ENCODE measurements at regions of chr12 and their contacts with region 1.

Region 1: GRCh38 chr12:27462151-27462694 is 15.7 kb downstream of the SMCO2 start:
- DNase-seq: no peak
- H3K4me3 Mint-ChIP-seq: peak overlapping the region; percentile 1
- H3K27ac Mint-ChIP-seq: peak overlapping the region; percentile 72
- H3K4me1 Mint-ChIP-seq: peaks cover 53% of the 10 kb centered on the region
- H3K27me3 Mint-ChIP-seq: no peaks in the 10 kb centered on the region

Region 2: GRCh38 chr12:27179400-27180214 is 282.6 kb before region 1 on chr12:
- intact Hi-C with region 1: loop called (anchors 2 kb)
- DNase-seq: peak; percentile 28
- H3K4me3 Mint-ChIP-seq: peak overlapping the region; percentile 49
- H3K27ac Mint-ChIP-seq: peak overlapping the region; percentile 80
- H3K4me1 Mint-ChIP-seq: peaks cover 49% of the 10 kb centered on the region
- H3K27me3 Mint-ChIP-seq: no peaks in the 10 kb centered on the region

Region 3: GRCh38 chr12:27498149-27498548 is 35.9 kb after region 1 on chr12:
- intact Hi-C with region 1: loop called (anchors 1 kb)
- DNase-seq: peak; percentile 21
- H3K4me3 Mint-ChIP-seq: peak overlapping the region; percentile 15
- H3K27ac Mint-ChIP-seq: peak overlapping the region; percentile 90
- H3K4me1 Mint-ChIP-seq: peaks cover 60% of the 10 kb centered on the region
- H3K27me3 Mint-ChIP-seq: peaks cover 10% of the 10 kb centered on the region

Region 4: GRCh38 chr12:27523642-27524493 is 61.6 kb after region 1 on chr12 and contains the start of gene PPFIBP1:
- intact Hi-C with region 1: loop called (anchors 1 kb)
- DNase-seq: peak; percentile 80
- H3K4me3 Mint-ChIP-seq: peak within 1 kb of the TSS; percentile 83
- H3K27ac Mint-ChIP-seq: peak within 1 kb of the TSS; percentile 89
- H3K4me1 Mint-ChIP-seq: peaks cover 20% of the 10 kb centered on the region
- H3K27me3 Mint-ChIP-seq: peaks cover 55% of the 10 kb centered on the region
- total RNA-seq, gene PPFIBP1: 73.3 and 74.1 TPM in 2 replicates

Region 5: GRCh38 chr12:27627123-27627835 is 165.1 kb after region 1 on chr12:
- intact Hi-C with region 1: loop called (anchors 2 kb)
- DNase-seq: no peak
- H3K4me3 Mint-ChIP-seq: no peak overlapping the region
- H3K27ac Mint-ChIP-seq: no peak overlapping the region
- H3K4me1 Mint-ChIP-seq: peaks cover 30% of the 10 kb centered on the region
- H3K27me3 Mint-ChIP-seq: peaks cover 3% of the 10 kb centered on the region